Activated T-helper 1 cell treated with anti-CD3 and anti-CD28 coated beads, Interleukin-12 subunit alpha, Interleukin-12 subunit beta, Interleukin-2, Interleukin-4 antibody, amounts not matched to agents 30 ng/mL and 10 ng/mL and 1 ng/mL, durations not matched to agents 14 hours and 24 hours and 36 hours (primary cell): ENCODE measurements at regions of chr5 and their contacts with region 1.

Region 1: DNA sequence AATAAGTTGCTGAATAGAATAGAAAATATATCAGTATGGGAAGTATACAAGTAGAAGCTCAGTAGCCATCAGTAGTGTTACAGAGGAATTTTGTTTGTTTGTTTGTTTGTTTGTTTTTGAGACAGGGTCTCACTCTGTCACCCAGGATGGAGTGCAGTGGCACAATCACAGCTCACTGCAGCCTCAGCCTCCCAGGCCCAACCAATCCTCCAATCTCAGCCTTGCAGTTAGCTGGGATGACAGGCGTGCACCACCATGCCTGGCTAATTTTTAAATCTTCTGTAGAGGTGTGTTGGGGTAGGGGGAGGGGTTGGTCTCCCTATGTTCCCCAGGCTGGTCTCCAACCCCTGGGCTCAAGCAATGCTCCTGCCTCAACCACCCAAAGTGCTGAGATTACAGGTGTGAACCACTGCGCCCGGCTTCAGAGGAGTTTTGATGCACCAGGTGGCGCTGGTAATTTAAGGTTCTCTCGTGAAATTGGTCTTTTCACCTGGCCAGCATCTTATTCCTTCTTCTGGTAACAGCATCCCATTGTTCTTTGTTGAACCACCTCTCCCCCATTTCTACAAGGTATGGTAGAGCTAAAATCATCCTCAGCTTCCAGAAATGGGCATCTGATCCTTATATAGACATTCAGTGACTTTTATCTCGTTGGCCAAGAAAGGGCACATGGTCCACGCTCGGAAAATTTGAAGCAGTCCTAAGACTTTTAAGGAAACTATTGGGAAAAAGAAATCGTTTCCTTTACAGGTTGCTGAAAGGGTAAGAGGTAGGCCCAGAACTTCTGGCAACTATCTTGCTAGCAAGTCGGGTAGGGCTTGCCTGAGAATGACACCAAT is 157.1 kb downstream of the ARRDC3 start:
- DNase-seq: peak; percentile 33
- H3K4me3 Mint-ChIP-seq: no peak overlapping the region
- H3K27ac Mint-ChIP-seq: no peak overlapping the region
- H3K4me1 Mint-ChIP-seq: peaks cover 6% of the 10 kb centered on the region
- H3K27me3 Mint-ChIP-seq: peaks cover 20% of the 10 kb centered on the region

Region 2: DNA sequence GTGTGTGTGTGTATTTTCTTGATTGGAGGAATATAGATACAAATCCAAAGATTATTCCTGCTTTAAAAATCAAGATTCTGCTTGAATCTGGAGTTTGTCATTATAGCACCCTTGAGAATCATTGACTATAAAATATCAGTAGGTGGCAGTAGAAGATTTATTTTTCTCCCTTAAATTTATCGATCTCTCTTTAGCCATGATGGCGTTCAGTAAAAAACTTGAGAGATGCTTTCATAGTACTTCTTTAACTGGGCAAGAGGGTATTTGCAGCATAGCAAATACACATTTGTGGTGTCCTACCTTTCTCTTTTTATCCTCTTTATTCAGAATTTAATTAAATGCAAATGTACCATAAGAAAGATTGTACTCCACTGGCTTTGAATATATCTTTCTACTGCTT is 359.7 kb before region 1 on chr5:
- intact Hi-C with region 1: loop called (anchors 1 kb)
- DNase-seq: no peak
- H3K4me3 Mint-ChIP-seq: no peak overlapping the region
- H3K27ac Mint-ChIP-seq: no peak overlapping the region
- H3K4me1 Mint-ChIP-seq: no peaks in the 10 kb centered on the region
- H3K27me3 Mint-ChIP-seq: peaks cover 5% of the 10 kb centered on the region

Region 3: GRCh38 chr5:91101600-91102379 is 124.3 kb before region 1 on chr5:
- intact Hi-C with region 1: loop called (anchors 1 kb)
- DNase-seq: peak; percentile 25
- H3K4me3 Mint-ChIP-seq: no peak overlapping the region
- H3K27ac Mint-ChIP-seq: no peak overlapping the region
- H3K4me1 Mint-ChIP-seq: no peaks in the 10 kb centered on the region
- H3K27me3 Mint-ChIP-seq: peaks cover 12% of the 10 kb centered on the region

Region 4: DNA sequence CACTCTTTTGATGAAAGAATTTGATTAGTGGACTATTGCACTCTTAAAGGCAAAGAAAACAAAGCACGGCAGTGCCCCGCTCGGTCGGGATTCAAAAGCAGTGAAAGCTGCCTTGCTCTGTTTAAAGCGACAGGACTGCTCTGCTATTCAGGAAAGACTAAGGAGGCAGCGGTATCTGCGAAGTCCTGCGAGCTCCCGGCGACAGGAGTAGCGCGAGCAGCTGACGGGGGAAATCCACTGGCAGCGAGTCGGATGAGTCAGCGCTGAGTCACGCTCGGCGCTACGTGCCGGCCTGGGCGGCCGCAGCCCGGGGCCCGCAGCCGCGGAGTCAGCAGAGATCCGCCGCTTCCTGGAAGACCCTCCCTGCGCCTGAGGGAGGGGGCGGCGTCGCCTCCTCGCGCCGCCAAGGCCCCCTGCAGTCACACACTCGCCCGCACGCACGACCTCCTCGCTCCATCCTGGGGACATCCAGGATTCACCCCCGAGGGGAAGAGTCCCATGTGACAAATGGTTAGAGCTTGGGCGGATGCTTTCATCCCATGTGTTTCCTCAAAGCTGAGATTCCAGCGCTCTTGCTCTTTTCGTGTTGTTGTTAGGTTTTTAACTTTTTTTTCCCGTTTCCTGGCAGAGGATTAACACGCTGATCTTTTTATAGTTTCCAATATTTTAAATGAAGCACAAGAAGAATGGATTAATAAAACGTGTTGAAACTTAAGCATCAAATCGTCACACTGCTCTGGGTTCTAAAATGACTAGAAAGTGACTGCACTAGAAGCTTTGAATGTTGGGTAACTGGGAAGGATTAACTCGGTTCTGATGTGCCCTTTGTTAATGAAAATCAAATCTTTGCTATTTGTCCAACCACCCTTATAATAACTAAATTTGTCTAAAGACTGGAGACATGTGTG is 54.5 kb after region 1 on chr5:
- intact Hi-C with region 1: loop called (anchors 1 kb)
- DNase-seq: peak; percentile 84
- H3K4me3 Mint-ChIP-seq: peak overlapping the region; percentile 81
- H3K27ac Mint-ChIP-seq: peak overlapping the region; percentile 82
- H3K4me1 Mint-ChIP-seq: peaks cover 40% of the 10 kb centered on the region
- H3K27me3 Mint-ChIP-seq: peaks cover 4% of the 10 kb centered on the region

Region 5: DNA sequence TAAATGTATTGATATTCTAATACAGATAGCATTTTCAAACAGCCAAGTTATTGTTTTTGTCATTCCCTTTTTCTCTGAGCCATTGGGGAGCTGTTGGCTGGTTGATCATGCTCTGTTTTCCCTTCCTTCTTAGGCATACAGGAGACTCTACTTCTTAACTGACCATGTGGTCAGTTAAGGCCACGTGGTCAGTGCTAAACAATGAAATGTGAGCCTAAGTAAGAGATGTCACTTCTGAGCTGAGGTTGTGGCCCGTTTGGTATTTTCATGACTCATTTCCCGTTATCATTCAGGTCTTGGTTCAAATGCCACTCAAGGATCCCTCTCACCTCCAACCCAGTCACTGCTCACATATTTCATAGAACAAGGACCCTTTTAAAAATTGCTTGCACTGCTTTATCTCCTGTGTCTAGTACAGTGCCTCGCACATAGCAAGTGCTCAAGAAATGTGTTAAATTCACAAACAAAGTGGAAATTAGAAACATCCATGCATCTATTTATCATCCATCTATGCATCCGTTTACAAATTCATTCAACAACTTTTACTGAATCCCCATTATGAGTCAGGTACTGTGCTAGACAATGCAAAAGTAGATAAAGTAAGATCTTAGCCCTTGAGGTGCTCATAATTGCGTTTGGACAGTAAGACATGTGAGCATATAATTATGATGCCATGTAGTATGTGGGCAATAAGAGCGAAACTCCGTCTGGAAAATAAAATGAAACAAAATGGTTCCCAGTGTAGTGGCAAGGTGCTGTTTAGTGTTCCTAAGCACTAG is 106.4 kb after region 1 on chr5:
- intact Hi-C with region 1: loop called (anchors 5 kb)
- DNase-seq: no peak
- H3K4me3 Mint-ChIP-seq: no peak overlapping the region
- H3K27ac Mint-ChIP-seq: peak overlapping the region; percentile 37
- H3K4me1 Mint-ChIP-seq: peaks cover 33% of the 10 kb centered on the region
- H3K27me3 Mint-ChIP-seq: peaks cover 11% of the 10 kb centered on the region